GM10248 (cell line): ENCODE measurements at regions of chr3 and their contacts with region 1.

Region 1: GRCh38 chr3:156151824-156152428 is 31.5 kb downstream of the KCNAB1 start:
- DNase-seq: peak; percentile 43
- CTCF ChIP-seq: peak; percentile 73

Region 2: GRCh38 chr3:156174229-156174847 is 22.4 kb after region 1 on chr3:
- CTCF ChIA-PET with region 1: interaction called, 122 read pairs
- POLR2A ChIA-PET with region 1: no interaction called
- DNase-seq: no peak
- CTCF ChIP-seq: peak; percentile 13

Region 3: GRCh38 chr3:156388497-156389448 is 236.8 kb after region 1 on chr3:
- CTCF ChIA-PET with region 1: interaction called, 134 read pairs
- POLR2A ChIA-PET with region 1: no interaction called
- DNase-seq: no peak
- CTCF ChIP-seq: no peak

Region 4: GRCh38 chr3:156509189-156510174 is 357.6 kb after region 1 on chr3:
- CTCF ChIA-PET with region 1: interaction called, 125 read pairs
- POLR2A ChIA-PET with region 1: no interaction called
- DNase-seq: peak; percentile 69
- CTCF ChIP-seq: peak; percentile 51

Region 5: GRCh38 chr3:157136647-157137387 is 984.9 kb after region 1 on chr3:
- CTCF ChIA-PET with region 1: interaction called, 43 read pairs
- POLR2A ChIA-PET with region 1: no interaction called
- DNase-seq: no peak
- CTCF ChIP-seq: no peak